Esophagus muscularis mucosa (tissue), 4 donors: ENCODE measurements at regions of chr3 and their contacts with region 1.

Region 1: DNA sequence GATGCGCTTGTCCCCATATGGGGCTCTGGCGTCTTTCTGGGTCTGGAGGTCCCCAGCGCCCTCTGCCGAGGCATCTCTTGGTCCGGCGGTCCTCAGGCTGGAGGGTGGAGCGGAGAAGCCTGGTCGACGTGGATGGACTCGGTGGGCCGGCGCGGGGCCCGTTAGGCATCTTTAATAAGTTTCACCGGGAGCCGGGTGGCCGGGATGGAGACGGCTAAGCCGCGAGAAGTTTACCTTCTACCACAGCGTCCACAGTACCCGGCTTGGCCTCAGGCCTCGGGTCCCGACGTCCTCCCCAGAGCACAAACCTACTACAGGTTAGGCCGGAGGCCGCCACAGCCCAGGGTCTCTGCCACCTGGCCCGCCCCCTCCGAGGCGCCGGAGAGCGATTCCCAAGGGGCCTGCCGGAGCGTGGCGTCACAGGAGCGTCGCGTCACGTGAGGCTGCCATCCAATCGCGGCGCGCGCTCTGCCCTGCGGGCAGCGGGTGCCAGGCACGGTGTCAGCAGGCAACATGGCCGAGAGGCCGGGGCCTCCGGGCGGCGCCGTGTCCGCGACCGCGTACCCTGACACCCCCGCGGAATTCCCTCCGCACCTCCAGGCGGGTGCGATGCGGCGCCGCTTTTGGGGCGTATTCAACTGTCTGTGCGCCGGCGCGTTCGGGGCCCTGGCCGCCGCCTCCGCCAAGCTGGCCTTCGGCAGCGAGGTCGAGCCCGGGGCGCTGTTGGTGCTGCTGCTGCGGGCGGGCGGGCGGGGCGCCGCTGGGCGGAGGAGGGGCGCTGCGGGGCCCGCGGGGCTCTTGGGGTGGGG is at the start of gene TMEM42:
- DNase-seq: peak; percentile 96
- H3K4me3 ChIP-seq: peak within 1 kb of the TSS; percentile 77 to 96 (median 78)
- H3K27ac ChIP-seq: peak within 1 kb of the TSS; percentile 91 to 97 (median 94)
- H3K4me1 ChIP-seq: peaks cover 6 to 26% (median 20%) of the 10 kb centered on the region in 4 donors
- H3K27me3 ChIP-seq: no peaks in the 10 kb centered on the region
- CTCF ChIP-seq: peak; percentile 14 to 38 (median 26)
- EP300 ChIP-seq: no peak
- POLR2A ChIP-seq: peak; percentile 60
- total RNA-seq, gene TMEM42: 6.5 to 15.2 (median 10.8) TPM

Region 2: GRCh38 chr3:44045476-44046275 is 815.9 kb before region 1 on chr3:
- intact Hi-C with region 1: no loop called
- DNase-seq: no peak
- H3K4me3 ChIP-seq: no peak overlapping the region
- H3K27ac ChIP-seq: no peak overlapping the region
- H3K4me1 ChIP-seq: no peaks in the 10 kb centered on the region
- H3K27me3 ChIP-seq: peaks cover 0 to 10% (median 0%) of the 10 kb centered on the region in 4 donors
- CTCF ChIP-seq: no peak
- EP300 ChIP-seq: no peak
- POLR2A ChIP-seq: no peak

Region 3: GRCh38 chr3:44761424-44762169 is 100.0 kb before region 1 on chr3 and contains the starts of genes KIAA1143 and KIF15:
- intact Hi-C with region 1: loop called (anchors 5 kb)
- DNase-seq: peak; percentile 98
- H3K4me3 ChIP-seq: peak within 1 kb of the TSS; percentile 64 to 89 (median 81)
- H3K27ac ChIP-seq: peak within 1 kb of the TSS; percentile 72 to 82 (median 76)
- H3K4me1 ChIP-seq: peaks cover 17 to 23% (median 19%) of the 10 kb centered on the region in 4 donors
- H3K27me3 ChIP-seq: no peaks in the 10 kb centered on the region
- CTCF ChIP-seq: no peak
- EP300 ChIP-seq: no peak
- POLR2A ChIP-seq: no peak
- total RNA-seq, gene KIAA1143: 26.2 to 33.9 (median 28.2) TPM
- total RNA-seq, gene KIF15: 0.26 to 1.2 (median 0.54) TPM

Region 4: DNA sequence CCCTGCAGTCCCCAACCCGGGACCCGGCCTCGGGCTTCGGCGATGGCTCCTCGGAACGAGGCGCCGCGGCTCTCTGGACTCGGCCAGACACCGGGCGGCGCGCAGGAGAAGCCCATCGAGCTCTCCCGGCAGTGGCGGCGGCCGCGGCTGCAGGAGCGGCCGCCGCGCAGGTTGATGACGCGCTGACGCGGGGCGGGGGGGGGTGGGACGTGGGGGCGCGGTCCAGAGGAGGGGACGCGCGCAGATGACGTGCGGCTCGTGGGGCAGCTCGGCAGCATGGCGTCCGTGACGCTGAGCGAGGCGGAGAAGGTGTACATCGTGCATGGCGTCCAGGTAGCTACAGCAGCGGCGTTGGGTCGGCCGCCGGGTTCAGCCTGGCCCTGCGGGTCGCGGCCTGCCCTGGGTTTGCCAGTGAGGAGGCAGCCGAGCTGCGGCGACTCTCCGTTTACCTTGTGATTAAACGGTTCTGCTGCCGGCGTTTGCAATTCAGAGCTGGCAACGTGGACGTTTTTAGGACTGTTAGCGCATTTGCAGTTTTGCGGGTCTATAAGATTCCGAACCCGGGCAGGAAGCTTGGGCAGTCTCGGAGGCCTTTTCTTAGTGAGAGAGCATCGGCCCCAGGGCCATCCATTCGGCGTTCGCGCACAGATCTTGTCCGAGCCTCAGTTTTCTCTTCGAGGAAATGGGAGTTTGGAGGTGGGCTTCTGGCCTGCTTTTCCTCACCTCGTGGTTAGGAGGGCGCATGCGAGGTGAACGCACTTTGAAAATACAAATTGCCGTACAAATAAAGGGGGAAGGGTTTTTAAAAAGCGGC is 114.6 kb after region 1 on chr3 and contains the starts of genes EXOSC7 and ZDHHC3:
- intact Hi-C with region 1: loop called (anchors 10 kb)
- DNase-seq: peak; percentile 97
- H3K4me3 ChIP-seq: peak within 1 kb of the TSS; percentile 71 to 99 (median 93)
- H3K27ac ChIP-seq: peak within 1 kb of the TSS; percentile 88 to 96 (median 94)
- H3K4me1 ChIP-seq: peaks cover 31 to 61% (median 42%) of the 10 kb centered on the region in 4 donors
- H3K27me3 ChIP-seq: no peaks in the 10 kb centered on the region
- CTCF ChIP-seq: no peak
- EP300 ChIP-seq: no peak
- POLR2A ChIP-seq: peak; percentile 44
- total RNA-seq, gene EXOSC7: 20.8 to 35.1 (median 29.2) TPM
- total RNA-seq, gene ZDHHC3: 59.6 to 81.3 (median 72.8) TPM